OCI-LY7 (cell line): ENCODE measurements at regions of chr2 and their contacts with region 1.

Region 1: GRCh38 chr2:231104115-231104713 is 20.6 kb downstream of the HTR2B start:
- DNase-seq: peak; percentile 64
- H3K4me3 ChIP-seq: no peak overlapping the region
- H3K27ac ChIP-seq: no peak overlapping the region
- H3K4me1 ChIP-seq: peaks cover 6% of the 10 kb centered on the region
- CTCF ChIP-seq: peak; percentile 92

Region 2: GRCh38 chr2:231411831-231412617 is 307.8 kb after region 1 on chr2:
- CTCF ChIA-PET with region 1: no interaction called
- POLR2A ChIA-PET with region 1: no interaction called
- intact Hi-C with region 1: loop called (anchors 5 kb)
- DNase-seq: peak; percentile 20
- H3K4me3 ChIP-seq: no peak overlapping the region
- H3K27ac ChIP-seq: no peak overlapping the region
- H3K4me1 ChIP-seq: no peaks in the 10 kb centered on the region
- CTCF ChIP-seq: peak; percentile 68

Region 3: GRCh38 chr2:231452799-231453508 is 348.7 kb after region 1 on chr2:
- CTCF ChIA-PET with region 1: no interaction called
- POLR2A ChIA-PET with region 1: interaction called, 3 read pairs
- intact Hi-C with region 1: loop called (anchors 5 kb)
- DNase-seq: peak; percentile 22
- H3K4me3 ChIP-seq: no peak overlapping the region
- H3K27ac ChIP-seq: peak overlapping the region; percentile 1
- H3K4me1 ChIP-seq: no peaks in the 10 kb centered on the region
- CTCF ChIP-seq: no peak